ENCODE measurements at regions of chr3 and their contacts with region 1.

Region 1: DNA sequence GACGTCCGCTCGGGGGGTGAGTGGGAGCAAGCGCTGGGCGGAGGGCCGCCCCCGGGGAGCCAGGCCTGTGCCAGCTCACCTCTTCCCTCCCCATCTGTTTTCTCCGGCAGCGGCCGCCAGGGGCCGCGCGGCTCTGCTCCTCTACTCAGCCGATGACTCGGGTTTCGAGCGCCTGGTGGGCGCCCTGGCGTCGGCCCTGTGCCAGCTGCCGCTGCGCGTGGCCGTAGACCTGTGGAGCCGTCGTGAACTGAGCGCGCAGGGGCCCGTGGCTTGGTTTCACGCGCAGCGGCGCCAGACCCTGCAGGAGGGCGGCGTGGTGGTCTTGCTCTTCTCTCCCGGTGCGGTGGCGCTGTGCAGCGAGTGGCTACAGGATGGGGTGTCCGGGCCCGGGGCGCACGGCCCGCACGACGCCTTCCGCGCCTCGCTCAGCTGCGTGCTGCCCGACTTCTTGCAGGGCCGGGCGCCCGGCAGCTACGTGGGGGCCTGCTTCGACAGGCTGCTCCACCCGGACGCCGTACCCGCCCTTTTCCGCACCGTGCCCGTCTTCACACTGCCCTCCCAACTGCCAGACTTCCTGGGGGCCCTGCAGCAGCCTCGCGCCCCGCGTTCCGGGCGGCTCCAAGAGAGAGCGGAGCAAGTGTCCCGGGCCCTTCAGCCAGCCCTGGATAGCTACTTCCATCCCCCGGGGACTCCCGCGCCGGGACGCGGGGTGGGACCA is 632 bp upstream of the CRELD1 start:
- DNase-seq: peak in 1 of 2 experiments; percentile 91
- H3K4me3 ChIP-seq: peak overlapping the region; percentile 37 to 78 (median 68)
- H3K27ac ChIP-seq: no peak overlapping the region
- H3K4me1 ChIP-seq: peaks cover 0 to 10% (median 5%) of the 10 kb centered on the region in 4 experiments; a peak in 6 of 7 replicates
- H3K27me3 ChIP-seq: peaks cover 0 to 3% (median 0%) of the 10 kb centered on the region in 4 experiments; a peak in 1 of 7 replicates
- CTCF ChIP-seq: peak; percentile 67 to 72 (median 68)
- EP300 ChIP-seq: no peak
- POLR2A ChIP-seq: peak in 1 of 2 experiments; percentile 22; a peak in 1 of 3 replicates
- RAD21 ChIP-seq: peak; percentile 53 to 71

Region 2: DNA sequence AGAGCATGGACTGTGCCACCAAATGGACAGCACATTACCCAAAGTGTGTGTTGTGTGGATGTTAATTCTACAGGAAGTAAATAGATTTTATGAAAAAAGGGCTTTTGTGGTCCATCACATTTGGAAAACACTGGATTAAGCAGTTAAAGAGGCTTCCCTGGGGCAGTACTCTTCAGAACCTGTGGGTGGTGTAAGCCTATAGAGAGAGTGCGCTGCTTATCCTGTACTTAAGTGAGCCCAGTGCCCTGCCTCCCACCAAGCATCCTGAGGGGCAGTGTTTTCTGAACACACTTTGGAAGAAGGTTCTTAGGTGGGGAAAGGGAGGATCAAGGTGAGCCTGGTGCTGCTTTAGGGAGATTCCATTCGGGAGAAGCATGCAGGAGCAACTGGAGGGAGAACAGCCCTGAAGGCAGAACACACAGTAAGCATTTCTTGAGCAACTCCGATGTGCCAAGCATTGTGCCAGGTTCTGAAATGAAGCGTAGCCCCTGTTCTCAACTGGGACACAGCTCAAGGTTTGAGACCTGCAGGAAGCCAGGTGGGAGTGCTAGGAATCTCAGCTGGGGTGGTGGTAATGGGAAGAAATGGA is 112.0 kb before region 1 on chr3:
- CTCF ChIA-PET with region 1: interaction called, 10 read pairs
- POLR2A ChIA-PET with region 1: interaction called, 3 read pairs
- DNase-seq: no peak
- H3K4me3 ChIP-seq: no peak overlapping the region
- H3K27ac ChIP-seq: no peak overlapping the region
- H3K4me1 ChIP-seq: peaks cover 0 to 5% (median 2%) of the 10 kb centered on the region in 4 experiments; a peak in 2 of 7 replicates
- H3K27me3 ChIP-seq: no peaks in the 10 kb centered on the region; a peak in 1 of 7 replicates
- CTCF ChIP-seq: peak; percentile 34 to 66 (median 58)
- EP300 ChIP-seq: no peak
- POLR2A ChIP-seq: no peak
- RAD21 ChIP-seq: peak; percentile 58 to 64

Region 3: DNA sequence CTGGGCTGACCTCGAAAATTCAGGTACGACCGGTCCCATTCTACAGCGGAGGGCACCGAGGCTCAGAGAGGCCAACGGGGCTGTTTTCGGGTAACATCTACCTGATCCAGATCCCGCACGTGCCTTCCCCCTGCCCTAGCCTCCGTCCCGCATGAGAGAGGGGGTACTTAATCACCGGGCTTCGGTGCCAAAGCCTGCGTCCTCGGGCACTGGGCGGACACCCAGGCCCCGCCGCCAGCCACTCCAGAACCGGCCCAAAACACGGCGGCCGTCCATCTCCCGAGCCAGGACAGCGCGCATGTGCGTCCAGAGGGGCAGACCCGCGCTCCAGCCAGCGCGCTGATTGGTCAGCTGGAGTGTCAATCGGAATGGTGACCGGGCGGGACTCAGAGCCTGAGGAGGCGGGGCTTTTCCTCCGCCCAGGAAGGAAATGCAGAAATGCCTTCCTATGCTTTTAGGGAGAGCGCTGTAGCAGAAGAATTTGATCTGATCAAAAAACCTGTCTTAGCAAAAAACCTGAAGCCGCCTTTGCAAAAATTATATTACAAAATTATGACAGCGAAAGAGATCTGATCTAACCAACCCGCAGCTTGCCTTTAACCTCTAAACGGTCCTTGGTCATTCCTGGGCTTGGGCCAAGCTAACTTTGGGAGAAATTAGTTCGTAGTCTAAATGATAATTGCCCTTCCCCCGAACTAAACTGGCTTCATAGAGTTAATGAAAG is 89.1 kb before region 1 on chr3 and contains the start of gene RPUSD3:
- CTCF ChIA-PET with region 1: interaction called, 6 read pairs
- POLR2A ChIA-PET with region 1: interaction called, 10 read pairs
- DNase-seq: peak; percentile 93 to 100
- H3K4me3 ChIP-seq: peak within 1 kb of the TSS; percentile 73 to 90 (median 78)
- H3K27ac ChIP-seq: peak within 1 kb of the TSS; percentile 62; the same call in 1 of the 2 replicates
- H3K4me1 ChIP-seq: peaks cover 0 to 6% (median under 1%) of the 10 kb centered on the region in 4 experiments; a peak in 2 of 7 replicates
- H3K27me3 ChIP-seq: no peaks in the 10 kb centered on the region
- CTCF ChIP-seq: no peak
- EP300 ChIP-seq: no peak
- POLR2A ChIP-seq: peak in 1 of 2 experiments; percentile 69; a peak in 2 of 3 replicates
- RAD21 ChIP-seq: no peak
- total RNA-seq, gene RPUSD3: 63.8 and 68.4 TPM in 2 replicates

Region 4: DNA sequence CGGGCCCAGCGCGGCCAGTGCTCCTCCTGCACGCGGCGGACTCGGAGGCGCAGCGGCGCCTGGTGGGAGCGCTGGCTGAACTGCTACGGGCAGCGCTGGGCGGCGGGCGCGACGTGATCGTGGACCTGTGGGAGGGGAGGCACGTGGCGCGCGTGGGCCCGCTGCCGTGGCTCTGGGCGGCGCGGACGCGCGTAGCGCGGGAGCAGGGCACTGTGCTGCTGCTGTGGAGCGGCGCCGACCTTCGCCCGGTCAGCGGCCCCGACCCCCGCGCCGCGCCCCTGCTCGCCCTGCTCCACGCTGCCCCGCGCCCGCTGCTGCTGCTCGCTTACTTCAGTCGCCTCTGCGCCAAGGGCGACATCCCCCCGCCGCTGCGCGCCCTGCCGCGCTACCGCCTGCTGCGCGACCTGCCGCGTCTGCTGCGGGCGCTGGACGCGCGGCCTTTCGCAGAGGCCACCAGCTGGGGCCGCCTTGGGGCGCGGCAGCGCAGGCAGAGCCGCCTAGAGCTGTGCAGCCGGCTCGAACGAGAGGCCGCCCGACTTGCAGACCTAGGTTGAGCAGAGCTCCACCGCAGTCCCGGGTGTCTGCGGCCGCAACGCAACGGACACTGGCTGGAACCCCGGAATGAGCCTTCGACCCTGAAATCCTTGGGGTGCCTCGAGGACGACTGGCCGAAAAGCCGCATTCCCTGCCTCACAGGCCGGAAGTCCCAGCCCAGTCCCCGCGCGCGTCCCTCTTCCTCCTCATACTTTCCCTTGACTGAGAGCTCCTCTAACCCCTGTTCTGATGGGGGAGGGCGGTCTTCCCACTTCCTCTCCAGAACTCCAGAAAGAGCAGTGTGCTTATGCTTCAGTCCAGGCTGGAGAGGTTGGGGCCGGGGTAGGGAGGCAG is 17.5 kb before region 1 on chr3:
- CTCF ChIA-PET with region 1: interaction called, 76 read pairs
- POLR2A ChIA-PET with region 1: interaction called, 8 read pairs
- DNase-seq: peak in 1 of 2 experiments; percentile 81
- H3K4me3 ChIP-seq: peak overlapping the region; percentile 46 to 72 (median 48)
- H3K27ac ChIP-seq: no peak overlapping the region
- H3K4me1 ChIP-seq: peaks cover 0 to 20% (median 17%) of the 10 kb centered on the region in 4 experiments; a peak in 6 of 7 replicates
- H3K27me3 ChIP-seq: peaks cover 0 to 18% (median 10%) of the 10 kb centered on the region in 4 experiments; a peak in 5 of 7 replicates
- CTCF ChIP-seq: 0 out of 4 replicates have a peak, but pooled peaks of 1 of the 3 experiments have one; percentile 23
- EP300 ChIP-seq: 0 out of 3 replicates have a peak, but pooled peaks of 1 of the 2 experiments have one; percentile 18
- POLR2A ChIP-seq: peak in 1 of 2 experiments; percentile 59; a peak in 1 of 3 replicates
- RAD21 ChIP-seq: peak in 1 of 2 experiments; percentile 12; a peak in 2 of 4 replicates

Region 5: GRCh38 chr3:9951962-9952805 is 19.2 kb after region 1 on chr3 and contains the start of gene PRRT3:
- CTCF ChIA-PET with region 1: interaction called, 86 read pairs
- POLR2A ChIA-PET with region 1: interaction called, 43 read pairs
- DNase-seq: peak in 1 of 2 experiments; percentile 83
- H3K4me3 ChIP-seq: peak within 1 kb of the TSS; percentile 69 to 91 (median 80)
- H3K27ac ChIP-seq: no peak within 1 kb of the TSS
- H3K4me1 ChIP-seq: peaks cover 11 to 24% (median 20%) of the 10 kb centered on the region in 4 experiments
- H3K27me3 ChIP-seq: peaks cover 0 to 11% (median under 1%) of the 10 kb centered on the region in 4 experiments; a peak in 3 of 7 replicates
- CTCF ChIP-seq: no peak
- EP300 ChIP-seq: no peak
- POLR2A ChIP-seq: peak in 1 of 2 experiments; percentile 41; a peak in 1 of 3 replicates
- RAD21 ChIP-seq: no peak
- total RNA-seq, gene PRRT3: 8.4 and 9.2 TPM in 2 replicates

Region 6: DNA sequence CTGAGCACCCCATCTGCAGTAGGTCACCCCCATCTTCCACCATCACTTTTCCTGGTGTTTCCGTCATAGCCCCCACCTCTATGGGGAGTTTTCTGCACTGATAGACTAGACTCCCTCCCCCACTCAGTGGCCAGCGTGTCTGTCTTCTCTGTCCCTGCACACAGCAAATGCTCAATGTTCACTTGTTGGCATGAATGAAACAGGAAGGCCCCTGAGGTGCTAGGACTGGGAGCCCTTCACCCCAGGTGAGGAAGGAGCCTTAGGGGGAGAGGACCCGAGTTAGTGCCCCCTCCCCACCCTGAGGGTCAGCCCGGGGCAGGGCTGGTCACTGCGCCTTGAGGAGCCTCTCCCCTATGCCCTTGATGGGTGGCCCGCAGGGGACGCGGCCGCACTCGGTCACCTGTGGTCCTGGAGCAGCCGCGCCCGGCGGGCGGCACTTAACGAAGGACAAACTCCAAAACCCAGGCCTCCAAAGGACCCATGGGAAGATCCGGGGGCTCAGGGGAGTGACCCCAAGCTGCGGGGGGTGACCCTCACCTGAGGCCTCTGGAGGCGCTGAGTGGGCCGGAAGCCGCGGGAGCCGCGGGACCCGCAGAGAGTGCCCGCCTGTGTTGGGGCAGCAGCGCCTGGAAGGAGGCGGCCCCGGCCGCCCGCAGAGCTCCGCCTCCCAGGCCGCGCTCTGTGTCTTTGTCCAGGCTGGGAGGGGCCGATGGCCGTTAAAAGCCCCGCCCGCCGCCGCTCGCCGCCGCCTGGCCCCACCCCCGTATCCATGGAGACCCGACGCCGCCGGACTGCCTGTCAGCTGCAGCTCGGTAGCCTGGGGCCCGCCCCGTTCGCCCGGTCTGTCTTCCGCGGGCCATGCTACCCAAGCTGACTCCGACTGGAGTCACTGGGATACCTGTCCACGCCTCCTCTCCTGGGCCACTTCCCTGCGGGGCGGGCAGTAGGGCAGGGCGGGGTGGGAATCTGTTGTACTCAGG is 77.8 kb after region 1 on chr3:
- CTCF ChIA-PET with region 1: no interaction called
- POLR2A ChIA-PET with region 1: no interaction called
- DNase-seq: peak; percentile 65 to 98
- H3K4me3 ChIP-seq: peak overlapping the region; percentile 46 to 83 (median 56)
- H3K27ac ChIP-seq: no peak overlapping the region
- H3K4me1 ChIP-seq: peaks cover 0 to 5% (median 3%) of the 10 kb centered on the region in 4 experiments; a peak in 4 of 7 replicates
- H3K27me3 ChIP-seq: no peaks in the 10 kb centered on the region
- CTCF ChIP-seq: no peak
- EP300 ChIP-seq: 0 out of 3 replicates have a peak, but pooled peaks of 1 of the 2 experiments have one; percentile 20
- POLR2A ChIP-seq: 0 out of 3 replicates have a peak, but pooled peaks of 1 of the 2 experiments have one; percentile 23
- RAD21 ChIP-seq: no peak